MCF 10A (cell line): ENCODE measurements at regions of chr3 and their contacts with region 1.

Region 1: DNA sequence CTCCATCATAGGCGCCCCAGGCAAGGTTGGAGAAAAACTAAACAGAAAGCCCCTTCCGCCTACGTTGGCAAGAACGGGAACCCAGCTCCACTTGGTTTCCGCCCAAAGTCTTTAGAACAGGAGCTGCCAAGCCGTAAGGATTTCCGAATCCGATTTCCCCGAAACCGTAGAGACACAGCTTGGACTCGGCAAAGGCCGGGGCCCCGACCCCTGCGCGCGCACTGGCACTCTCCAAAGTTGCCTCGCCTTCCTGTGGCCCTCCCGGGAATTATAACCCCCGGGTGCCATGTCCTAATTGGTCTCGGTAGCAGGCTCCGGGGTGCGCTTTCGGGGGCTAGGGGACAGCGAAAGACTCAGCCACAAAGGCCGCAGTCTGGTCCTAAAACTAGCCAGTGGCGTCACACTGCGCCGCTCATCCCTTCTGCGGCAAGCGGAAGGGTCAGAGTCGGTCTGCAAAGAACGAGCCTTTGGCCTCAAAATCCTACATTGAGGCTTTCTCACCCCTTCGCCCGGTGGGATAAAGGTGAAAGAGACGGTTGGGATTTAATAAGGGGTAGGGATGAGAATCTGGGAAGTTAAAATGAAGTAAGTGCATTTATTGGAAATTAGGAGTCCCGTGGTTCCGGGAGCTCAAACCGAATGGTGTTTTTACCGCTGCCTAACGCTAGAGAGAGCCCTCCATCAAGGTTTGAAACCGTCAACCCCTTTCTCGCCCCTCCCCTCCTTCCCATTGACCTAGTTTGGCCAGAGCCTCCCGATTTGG is 6.8 kb downstream of the BCL6 start:
- DNase-seq: peak; percentile 95
- H3K4me3 Mint-ChIP-seq: peak overlapping the region; percentile 98
- H3K27ac Mint-ChIP-seq: peak overlapping the region; percentile 100
- H3K4me1 Mint-ChIP-seq: peaks cover 44% of the 10 kb centered on the region
- H3K27me3 Mint-ChIP-seq: no peaks in the 10 kb centered on the region
- CTCF ChIP-seq: peak; percentile 63

Region 2: DNA sequence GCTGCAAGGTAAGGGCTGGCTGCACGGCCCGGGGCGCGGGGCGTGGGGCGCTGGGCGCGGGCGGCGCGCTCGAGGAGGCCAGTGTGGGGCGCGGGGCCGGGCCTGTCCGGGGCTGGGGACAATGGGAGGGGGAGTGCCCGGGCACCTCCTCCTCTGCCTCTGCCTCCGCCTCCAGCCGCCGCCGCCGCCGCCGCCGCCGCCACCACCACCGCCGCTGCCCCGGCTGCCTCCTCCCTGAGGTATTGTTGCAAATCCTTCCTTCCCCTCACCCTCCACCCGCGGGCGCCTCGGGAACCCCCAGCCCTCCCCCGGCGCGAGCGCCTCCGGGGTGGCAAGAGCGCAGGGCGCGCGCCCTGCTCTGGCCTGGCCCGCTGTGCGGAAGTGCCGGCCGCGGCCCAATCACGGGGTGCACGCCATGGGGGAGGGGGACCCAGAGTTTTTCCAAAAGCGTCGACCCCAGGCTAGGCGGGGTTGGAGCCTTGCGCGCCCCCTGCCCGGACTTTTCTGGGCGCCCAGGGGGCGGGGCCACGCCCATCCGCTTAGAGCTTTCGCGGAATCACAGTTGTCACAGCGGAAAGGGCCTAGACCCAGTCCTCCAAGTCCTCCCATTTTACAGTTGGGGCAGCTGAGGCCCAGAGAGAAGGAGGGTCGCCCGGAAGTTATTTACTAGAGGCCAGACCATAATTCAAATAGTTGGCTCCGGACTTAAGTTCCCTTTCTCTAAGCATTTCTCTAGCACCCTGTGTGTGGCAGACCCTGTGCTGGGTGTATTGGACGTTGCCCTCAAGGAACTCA is 415.7 kb after region 1 on chr3 and contains the start of gene LPP:
- CTCF ChIA-PET with region 1: interaction called, 12 read pairs
- POLR2A ChIA-PET with region 1: interaction called, 25 read pairs
- intact Hi-C with region 1: no loop called
- DNase-seq: peak; percentile 67
- H3K4me3 Mint-ChIP-seq: peak within 1 kb of the TSS; percentile 90
- H3K27ac Mint-ChIP-seq: peak within 1 kb of the TSS; percentile 96
- H3K4me1 Mint-ChIP-seq: peaks cover 42% of the 10 kb centered on the region
- H3K27me3 Mint-ChIP-seq: no peaks in the 10 kb centered on the region
- CTCF ChIP-seq: no peak
- total RNA-seq, gene LPP: 107 and 117 TPM in 2 replicates

Region 3: GRCh38 chr3:188348435-188349244 is 610.1 kb after region 1 on chr3:
- CTCF ChIA-PET with region 1: interaction called, 12 read pairs
- POLR2A ChIA-PET with region 1: interaction called, 24 read pairs
- intact Hi-C with region 1: no loop called
- DNase-seq: peak; percentile 96
- H3K4me3 Mint-ChIP-seq: peak overlapping the region; percentile 54
- H3K27ac Mint-ChIP-seq: peak overlapping the region; percentile 46
- H3K4me1 Mint-ChIP-seq: peaks cover 29% of the 10 kb centered on the region
- H3K27me3 Mint-ChIP-seq: no peaks in the 10 kb centered on the region
- CTCF ChIP-seq: no peak

Region 4: GRCh38 chr3:188673646-188674186 is 935.2 kb after region 1 on chr3:
- CTCF ChIA-PET with region 1: interaction called, 25 read pairs
- POLR2A ChIA-PET with region 1: interaction called, 75 read pairs
- intact Hi-C with region 1: loop called (anchors 5 kb)
- DNase-seq: peak; percentile 95
- H3K4me3 Mint-ChIP-seq: peak overlapping the region; percentile 43
- H3K27ac Mint-ChIP-seq: peak overlapping the region; percentile 89
- H3K4me1 Mint-ChIP-seq: peaks cover 38% of the 10 kb centered on the region
- H3K27me3 Mint-ChIP-seq: no peaks in the 10 kb centered on the region
- CTCF ChIP-seq: no peak

Region 5: DNA sequence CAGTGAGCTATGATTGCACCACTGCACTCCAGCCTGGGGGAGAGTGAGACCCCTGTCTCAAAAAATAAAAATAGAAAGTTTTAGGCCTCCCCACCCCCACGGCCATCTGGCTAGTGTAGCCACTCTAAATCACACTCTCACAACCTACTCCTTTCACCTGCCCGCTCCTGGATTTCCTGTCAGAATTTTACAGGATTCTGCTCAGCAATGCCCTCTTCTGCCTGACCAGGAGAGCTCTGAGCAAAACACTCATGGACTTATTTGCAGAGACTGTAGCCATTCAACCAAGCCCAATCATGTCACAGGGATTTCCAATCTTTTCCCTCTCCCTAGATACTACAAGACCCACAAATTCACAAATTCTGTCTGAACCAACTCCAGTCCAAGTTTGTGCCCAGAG is 1190.6 kb after region 1 on chr3:
- CTCF ChIA-PET with region 1: interaction called, 10 read pairs
- POLR2A ChIA-PET with region 1: interaction called, 3 read pairs
- intact Hi-C with region 1: loop called (anchors 1 kb)
- DNase-seq: peak; percentile 58
- H3K4me3 Mint-ChIP-seq: no peak overlapping the region
- H3K27ac Mint-ChIP-seq: peak overlapping the region; percentile 4
- H3K4me1 Mint-ChIP-seq: peaks cover 6% of the 10 kb centered on the region
- H3K27me3 Mint-ChIP-seq: no peaks in the 10 kb centered on the region
- CTCF ChIP-seq: peak; percentile 15

Region 6: GRCh38 chr3:189148081-189148507 is 1409.6 kb after region 1 on chr3:
- CTCF ChIA-PET with region 1: interaction called, 27 read pairs
- POLR2A ChIA-PET with region 1: interaction called, 6 read pairs
- intact Hi-C with region 1: loop called (anchors 1 kb)
- DNase-seq: peak; percentile 73
- H3K4me3 Mint-ChIP-seq: no peak overlapping the region
- H3K27ac Mint-ChIP-seq: no peak overlapping the region
- H3K4me1 Mint-ChIP-seq: peaks cover 6% of the 10 kb centered on the region
- H3K27me3 Mint-ChIP-seq: no peaks in the 10 kb centered on the region
- CTCF ChIP-seq: peak; percentile 59